Sigmoid colon (tissue), 7 donors: ENCODE measurements at regions of chr6 and their contacts with region 1.

Region 1: DNA sequence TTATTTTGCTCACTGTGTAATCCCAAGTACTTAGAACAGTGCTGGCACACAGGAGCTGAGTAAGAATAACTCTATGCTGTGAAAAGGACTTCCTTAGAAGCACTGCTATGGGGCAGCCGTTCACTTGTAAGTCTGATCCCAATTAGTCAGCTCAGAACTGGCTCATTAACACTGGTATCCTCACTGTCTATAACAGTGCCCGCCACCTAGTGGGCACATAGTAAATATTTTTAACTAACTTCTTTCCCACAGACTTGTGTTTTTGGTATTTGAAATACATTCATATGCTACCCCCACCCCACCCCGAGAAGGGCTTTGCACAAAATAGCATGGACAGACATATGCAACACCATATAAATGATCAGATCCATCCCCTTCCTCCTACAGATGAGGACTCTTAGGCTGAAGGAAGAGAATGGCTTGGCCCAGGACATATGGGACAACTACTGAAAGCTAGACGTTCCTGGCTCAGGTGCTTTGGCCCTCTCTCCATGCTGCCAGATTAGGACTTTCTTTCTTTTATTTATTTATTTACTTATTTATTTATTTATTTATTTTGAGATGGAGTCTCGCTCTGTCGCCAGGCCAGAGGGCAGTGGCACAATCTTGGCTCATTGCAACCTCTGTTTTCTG is 47.1 kb downstream of the DST start:
- DNase-seq: no peak
- H3K4me3 ChIP-seq: no peak overlapping the region
- H3K27ac ChIP-seq: peak overlapping the region; percentile 0 to 51 (median 33)
- H3K4me1 ChIP-seq: peaks cover 0 to 38% (median 23%) of the 10 kb centered on the region in 4 donors
- H3K27me3 ChIP-seq: no peaks in the 10 kb centered on the region
- CTCF ChIP-seq: peak; percentile 20 to 60 (median 58)
- EP300 ChIP-seq: no peak
- POLR2A ChIP-seq: no peak

Region 2: DNA sequence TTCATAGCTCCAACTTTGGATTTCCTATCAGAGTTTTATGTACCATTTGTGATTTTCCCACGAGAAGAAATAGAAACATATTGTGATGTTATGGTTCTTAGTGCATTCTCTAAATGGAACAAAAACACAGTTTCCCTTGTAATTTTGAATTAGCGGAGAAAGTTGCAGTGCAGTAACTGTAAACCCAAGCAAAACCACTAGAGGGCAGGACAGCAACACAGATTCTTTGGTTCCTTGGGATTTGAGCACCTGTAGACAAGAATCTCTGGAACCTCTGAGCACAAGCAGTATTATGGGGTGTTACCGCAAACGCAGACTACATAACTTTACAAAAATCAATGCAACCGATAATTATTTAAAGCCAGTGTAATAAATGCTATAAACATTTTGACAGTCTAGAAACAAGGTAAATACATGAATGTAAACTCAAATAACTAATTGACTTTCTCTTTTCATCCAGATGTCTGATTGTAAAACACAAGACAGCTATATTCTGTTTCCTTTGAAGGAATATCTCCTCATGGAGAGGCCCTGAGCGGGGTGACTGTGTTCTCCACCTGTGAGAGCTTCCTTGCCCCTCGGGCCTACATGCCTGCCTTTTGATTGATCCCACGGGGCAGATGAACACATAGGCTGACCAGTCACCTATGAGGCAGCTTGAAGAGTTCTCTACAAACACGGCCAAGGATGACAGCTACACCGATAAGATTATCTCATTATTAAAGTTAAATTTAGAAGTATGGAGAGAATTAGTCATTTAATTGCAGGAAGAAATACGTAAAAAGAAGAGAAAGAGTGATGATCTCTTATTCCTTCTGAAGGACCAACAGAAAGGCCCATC is 280.7 kb before region 1 on chr6:
- intact Hi-C with region 1: loop called (anchors 2 kb)
- DNase-seq: no peak
- H3K4me3 ChIP-seq: no peak overlapping the region
- H3K27ac ChIP-seq: no peak overlapping the region
- H3K4me1 ChIP-seq: peaks cover 0 to 2% (median 0%) of the 10 kb centered on the region in 4 donors
- H3K27me3 ChIP-seq: no peaks in the 10 kb centered on the region
- CTCF ChIP-seq: peak; percentile 28 to 83 (median 72)
- EP300 ChIP-seq: no peak
- POLR2A ChIP-seq: no peak

Region 3: DNA sequence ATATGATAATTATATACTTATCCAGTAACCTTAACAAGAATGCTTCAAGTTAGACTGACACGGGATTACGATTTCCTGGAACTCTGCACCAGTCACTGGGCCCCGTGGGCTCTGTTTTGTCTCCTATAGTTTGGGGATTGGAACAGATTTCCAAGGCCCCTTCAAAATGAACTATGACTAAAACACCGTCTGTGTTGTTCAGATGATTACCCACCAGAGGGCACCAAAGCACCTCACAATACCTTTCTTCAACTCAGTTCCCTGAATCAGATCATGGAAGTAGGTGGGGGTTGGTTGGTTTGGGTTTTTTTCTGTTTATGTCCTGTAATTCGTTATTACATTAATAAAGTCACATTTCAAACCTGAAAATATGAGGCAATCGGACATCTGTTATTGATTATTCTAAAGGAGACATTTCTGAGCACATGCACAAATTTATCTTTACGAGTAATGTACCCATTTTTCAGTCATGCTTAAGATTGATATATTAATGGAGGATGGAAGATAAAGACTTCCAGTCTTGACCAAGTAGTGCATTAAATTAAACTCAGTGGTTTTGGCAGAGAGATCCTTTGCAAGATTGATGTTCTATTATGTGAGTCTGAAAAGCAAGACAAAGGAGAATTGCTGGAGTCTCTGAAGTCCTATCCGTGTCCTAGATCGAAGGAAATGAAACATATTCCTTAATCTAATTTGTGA is 236.3 kb before region 1 on chr6:
- intact Hi-C with region 1: loop called (anchors 1 kb)
- DNase-seq: peak; percentile 84
- H3K4me3 ChIP-seq: no peak overlapping the region
- H3K27ac ChIP-seq: peak overlapping the region in 2 of 4 donors; percentile 59 to 62
- H3K4me1 ChIP-seq: peaks cover 0 to 48% (median 37%) of the 10 kb centered on the region in 4 donors
- H3K27me3 ChIP-seq: no peaks in the 10 kb centered on the region
- CTCF ChIP-seq: peak; percentile 79 to 84 (median 82)
- EP300 ChIP-seq: no peak
- POLR2A ChIP-seq: no peak

Region 4: GRCh38 chr6:57198926-57199636 is 603.5 kb after region 1 on chr6:
- intact Hi-C with region 1: no loop called
- DNase-seq: no peak
- H3K4me3 ChIP-seq: no peak overlapping the region
- H3K27ac ChIP-seq: peak overlapping the region; percentile 30 to 96 (median 68)
- H3K4me1 ChIP-seq: peaks cover 0 to 70% (median 44%) of the 10 kb centered on the region in 4 donors
- H3K27me3 ChIP-seq: no peaks in the 10 kb centered on the region
- CTCF ChIP-seq: no peak
- EP300 ChIP-seq: no peak
- POLR2A ChIP-seq: no peak